K562 (cell line): ENCODE measurements at regions of chr7 and their contacts with region 1.

Region 1: DNA sequence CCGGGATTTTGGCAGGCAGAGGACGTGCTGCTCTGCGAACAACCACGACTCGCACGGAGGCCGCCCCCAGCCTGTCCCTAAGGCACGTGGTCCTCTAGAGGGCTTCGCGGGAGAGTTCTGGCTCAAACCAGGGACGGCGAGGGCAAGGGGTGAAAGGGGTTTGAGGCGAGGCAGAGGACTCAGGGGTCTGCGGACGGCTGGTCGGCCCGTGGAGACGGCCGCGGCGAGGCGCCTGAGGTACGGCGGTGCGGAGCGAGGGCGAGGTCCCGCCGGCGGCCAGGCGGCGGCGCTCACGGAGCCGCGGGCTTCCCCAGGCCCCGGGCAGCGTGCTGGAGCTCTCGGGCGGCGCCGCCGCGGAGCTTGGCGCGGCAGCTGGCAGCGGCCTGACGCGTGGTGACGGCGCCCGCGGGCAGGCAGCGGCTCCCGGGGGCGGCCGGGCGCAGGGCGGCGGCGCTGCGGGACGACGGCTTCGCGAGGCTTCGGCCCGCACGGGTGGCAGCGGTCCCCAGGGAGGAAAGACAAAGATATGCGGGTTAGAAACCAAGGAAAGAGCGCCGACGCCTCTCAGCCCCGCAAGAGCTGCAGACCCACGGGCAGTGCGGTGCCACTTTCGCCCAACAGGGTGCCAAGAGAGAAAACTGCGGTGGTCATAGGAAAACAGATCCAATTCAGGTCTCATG is 44.8 kb downstream of the ZNF800 start:
- DNase-seq: peak; percentile 75 to 88 (median 79)
- ATAC-seq: peak; percentile 99
- H3K4me3 ChIP-seq: peak overlapping the region; percentile 29
- H3K27ac ChIP-seq: no peak overlapping the region
- H3K4me1 ChIP-seq: peaks cover 0 to 8% of the 10 kb centered on the region in 2 experiments; a peak in 3 of 5 replicates
- H3K27me3 ChIP-seq: no peaks in the 10 kb centered on the region
- CTCF ChIP-seq: peak; percentile 61 to 98 (median 94)
- EP300 ChIP-seq: no peak
- POLR2A ChIP-seq: no peak
- RAD21 ChIP-seq: peak; percentile 72 to 83

Region 2: GRCh38 chr7:127392566-127393367 is 45.1 kb after region 1 on chr7 and contains the start of gene ZNF800:
- CTCF ChIA-PET with region 1: interaction called, 3 read pairs
- POLR2A ChIA-PET with region 1: interaction called, 6 read pairs
- in situ Hi-C with region 1: no loop called
- intact Hi-C with region 1: loop called (anchors 2 kb)
- DNase-seq: peak; percentile 97 to 99 (median 99)
- ATAC-seq: peak; percentile 89
- H3K4me3 ChIP-seq: peak within 1 kb of the TSS; percentile 92
- H3K27ac ChIP-seq: peak within 1 kb of the TSS; percentile 97
- H3K4me1 ChIP-seq: peaks cover 25% of the 10 kb centered on the region in 2 experiments
- H3K27me3 ChIP-seq: no peaks in the 10 kb centered on the region
- CTCF ChIP-seq: 0 out of 6 replicates have a peak, but pooled peaks of 1 of the 3 experiments have one; percentile 3
- EP300 ChIP-seq: peak; percentile 27; the same call in 1 of the 2 replicates
- POLR2A ChIP-seq: peak; percentile 99
- RAD21 ChIP-seq: no peak
- polyA plus RNA-seq, gene ZNF800: 7.5 to 9.3 TPM

Region 3: DNA sequence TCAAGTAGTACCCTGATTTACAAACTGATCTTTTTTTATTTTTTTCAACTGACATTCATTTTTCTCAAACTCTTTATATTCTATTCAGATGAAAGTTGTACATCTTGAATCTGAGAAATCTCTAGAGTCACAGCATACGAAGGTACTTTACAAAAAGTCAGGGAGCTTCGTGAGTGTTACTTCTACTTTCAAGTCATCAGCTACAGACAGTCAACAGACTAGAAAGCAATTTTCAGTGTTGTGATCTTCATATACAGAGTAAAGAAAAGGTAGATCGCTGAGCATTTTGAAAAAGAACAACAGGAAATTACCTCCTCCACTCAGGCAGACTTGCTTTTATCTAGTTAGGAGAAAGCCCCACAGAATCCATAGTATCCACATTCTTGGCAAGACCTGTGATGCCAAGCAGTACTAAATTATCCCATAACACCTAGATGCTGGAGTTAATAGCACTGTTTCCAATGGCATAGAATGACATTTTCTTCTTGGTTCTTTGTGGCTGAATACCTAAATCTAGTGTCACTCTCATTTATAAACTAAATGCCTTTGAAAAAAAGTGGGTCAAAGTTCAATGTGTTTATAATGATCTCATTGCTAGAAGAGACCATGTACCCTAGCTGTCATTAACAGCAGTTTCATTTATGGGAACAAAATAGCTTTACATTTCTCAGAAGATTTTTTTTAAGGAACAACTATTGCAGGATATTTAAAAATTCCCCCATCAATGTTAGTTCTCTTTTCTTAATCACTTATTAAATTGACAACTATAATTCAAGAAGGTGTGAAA is 56.8 kb after region 1 on chr7:
- CTCF ChIA-PET with region 1: interaction called, 10 read pairs
- POLR2A ChIA-PET with region 1: no interaction called
- in situ Hi-C with region 1: no loop called
- intact Hi-C with region 1: loop called (anchors 1 kb)
- DNase-seq: no peak
- ATAC-seq: no peak
- H3K4me3 ChIP-seq: no peak overlapping the region
- H3K27ac ChIP-seq: no peak overlapping the region
- H3K4me1 ChIP-seq: no peaks in the 10 kb centered on the region
- H3K27me3 ChIP-seq: peaks cover 3 to 7% of the 10 kb centered on the region in 2 experiments; a peak in 2 of 5 replicates
- CTCF ChIP-seq: no peak
- EP300 ChIP-seq: no peak
- POLR2A ChIP-seq: no peak
- RAD21 ChIP-seq: no peak

Region 4: DNA sequence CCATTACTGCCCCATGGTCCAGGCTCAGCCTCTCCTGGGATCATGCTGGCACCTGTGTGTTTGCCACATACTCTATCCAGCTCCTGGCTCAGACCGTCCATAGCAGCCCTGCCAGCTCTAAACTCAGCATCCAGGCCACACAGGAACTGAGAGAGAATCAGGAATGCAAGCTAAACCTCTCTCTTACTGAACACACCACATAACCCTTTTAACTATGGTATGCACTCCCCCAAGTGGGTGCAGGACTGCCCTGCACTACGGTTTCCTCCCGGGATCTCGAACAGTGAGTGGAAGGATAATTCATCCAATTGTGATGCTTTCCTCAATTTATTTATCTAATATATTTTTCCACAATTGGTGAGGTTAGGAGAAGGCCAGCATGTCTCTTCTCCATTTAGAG is 61.9 kb after region 1 on chr7:
- CTCF ChIA-PET with region 1: interaction called, 10 read pairs
- POLR2A ChIA-PET with region 1: no interaction called
- in situ Hi-C with region 1: no loop called
- intact Hi-C with region 1: loop called (anchors 1 kb)
- DNase-seq: peak in 1 of 4 experiments; percentile 20
- ATAC-seq: peak; percentile 85
- H3K4me3 ChIP-seq: no peak overlapping the region
- H3K27ac ChIP-seq: no peak overlapping the region
- H3K4me1 ChIP-seq: no peaks in the 10 kb centered on the region
- H3K27me3 ChIP-seq: peaks cover 4 to 5% of the 10 kb centered on the region in 2 experiments; a peak in 4 of 5 replicates
- CTCF ChIP-seq: peak; percentile 17 to 55 (median 50); a peak in 4 of 6 replicates
- EP300 ChIP-seq: no peak
- POLR2A ChIP-seq: no peak
- RAD21 ChIP-seq: peak in 1 of 2 experiments; percentile 57

Region 5: DNA sequence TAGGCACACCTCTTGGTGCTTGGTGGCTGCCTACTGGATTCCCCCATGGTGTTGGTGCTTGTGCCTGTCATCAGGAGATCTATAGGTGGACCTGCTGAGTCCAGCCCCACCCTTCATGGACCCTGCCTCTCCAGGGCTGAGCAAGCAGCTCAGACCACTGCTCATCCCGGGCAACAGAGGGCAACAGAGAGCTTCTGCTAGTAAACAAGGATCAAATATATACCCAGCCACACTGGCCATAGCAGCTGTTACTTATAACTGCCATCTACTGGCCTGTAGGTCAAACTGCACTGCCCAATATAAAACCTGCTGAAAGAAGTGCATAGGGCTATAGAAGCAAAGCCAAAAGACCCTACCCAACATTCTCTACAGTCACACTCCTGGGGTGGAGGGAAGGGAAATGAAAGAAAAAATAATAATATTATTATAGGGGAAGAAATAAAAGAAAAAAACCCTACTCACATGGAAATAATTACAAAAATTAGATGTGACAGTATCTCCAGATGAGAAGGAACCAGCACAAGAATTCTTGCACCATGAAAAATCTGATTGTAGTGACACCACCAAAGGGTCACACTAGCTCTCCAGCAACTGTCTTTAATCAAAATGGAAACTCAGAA is 99.7 kb after region 1 on chr7:
- CTCF ChIA-PET with region 1: interaction called, 17 read pairs
- POLR2A ChIA-PET with region 1: no interaction called
- in situ Hi-C with region 1: no loop called
- intact Hi-C with region 1: loop called (anchors 1 kb)
- DNase-seq: peak; percentile 74 to 85 (median 75)
- ATAC-seq: peak; percentile 100
- H3K4me3 ChIP-seq: no peak overlapping the region
- H3K27ac ChIP-seq: no peak overlapping the region
- H3K4me1 ChIP-seq: no peaks in the 10 kb centered on the region
- H3K27me3 ChIP-seq: peaks cover 4 to 9% of the 10 kb centered on the region in 2 experiments; a peak in 3 of 5 replicates
- CTCF ChIP-seq: peak; percentile 96 to 99 (median 99)
- EP300 ChIP-seq: no peak
- POLR2A ChIP-seq: no peak
- RAD21 ChIP-seq: peak; percentile 78 to 94